ENCODE measurements at regions of chr5 and their contacts with region 1.

Region 1: DNA sequence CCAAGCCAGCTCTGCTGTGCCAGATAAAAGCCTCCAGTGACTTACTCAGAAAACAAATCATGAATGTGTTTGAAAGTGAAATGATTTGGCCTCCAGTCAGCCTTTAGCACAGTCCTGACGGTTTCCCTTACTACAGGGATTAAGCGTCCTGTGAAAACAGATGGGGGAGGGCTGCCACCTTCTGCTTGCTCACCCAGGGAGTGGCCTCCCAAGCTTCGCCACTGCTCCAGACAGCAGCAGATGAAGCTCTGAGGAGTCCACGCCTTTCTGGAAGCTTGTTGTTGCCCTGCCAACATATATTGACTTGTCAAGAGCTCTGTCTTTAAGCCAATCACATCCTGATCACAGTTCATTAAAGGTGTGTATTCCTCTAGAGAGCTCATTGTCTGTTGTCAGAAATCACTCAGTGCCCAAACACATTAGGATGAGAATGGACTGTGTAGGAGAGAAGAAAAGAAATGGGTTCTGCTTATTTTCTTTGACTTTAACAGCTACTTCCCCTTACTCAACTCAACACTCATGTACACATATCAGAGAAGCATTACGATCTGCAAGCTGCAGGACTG is 4.9 kb upstream of the FYB1 start:
- DNase-seq: peak; percentile 63 to 79
- H3K4me3 ChIP-seq: no peak overlapping the region
- H3K27ac ChIP-seq: peak overlapping the region in 3 of 5 donors; percentile 7 to 33 (median 28)
- H3K4me1 ChIP-seq: peaks cover 0 to 27% (median 7%) of the 10 kb centered on the region in 4 donors
- H3K27me3 ChIP-seq: no peaks in the 10 kb centered on the region
- CTCF ChIP-seq: no peak
- EP300 ChIP-seq: no peak
- POLR2A ChIP-seq: no peak

Region 2: DNA sequence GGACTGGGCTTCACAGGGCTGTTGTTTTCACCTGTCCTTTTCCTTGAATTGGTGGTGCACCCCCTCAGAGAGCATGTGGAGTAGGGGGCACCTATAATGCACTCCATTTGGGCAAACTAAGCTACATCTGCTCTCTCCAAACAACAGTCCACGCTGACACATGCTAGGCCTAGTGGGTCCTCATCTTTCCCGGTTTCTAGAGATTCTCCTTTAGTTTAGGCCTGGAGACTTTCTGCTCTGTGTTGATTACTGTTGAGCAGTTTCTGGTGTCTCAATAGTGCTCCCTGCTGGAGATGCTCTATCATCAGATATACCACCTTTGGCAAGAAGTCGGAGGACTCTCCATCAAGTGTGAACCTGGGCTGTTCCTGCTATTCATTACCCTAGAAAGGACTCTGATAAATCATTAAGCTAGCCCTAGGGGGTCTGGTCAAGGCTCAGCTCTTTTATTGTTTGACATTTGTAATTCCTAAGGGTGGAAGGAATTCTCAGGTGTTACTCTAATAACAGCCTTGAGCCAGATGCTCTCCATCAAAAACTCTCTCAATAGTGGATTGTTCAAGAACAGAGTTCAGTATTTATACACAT is 59.0 kb after region 1 on chr5:
- intact Hi-C with region 1: loop called (anchors 10 kb)
- DNase-seq: peak in 1 of 2 donors; percentile 86
- H3K4me3 ChIP-seq: no peak overlapping the region
- H3K27ac ChIP-seq: no peak overlapping the region
- H3K4me1 ChIP-seq: peaks cover 0 to 16% (median 4%) of the 10 kb centered on the region in 4 donors
- H3K27me3 ChIP-seq: no peaks in the 10 kb centered on the region
- CTCF ChIP-seq: peak in 4 of 7 experiments; percentile 34 to 47 (median 38)
- EP300 ChIP-seq: no peak
- POLR2A ChIP-seq: no peak

Region 3: DNA sequence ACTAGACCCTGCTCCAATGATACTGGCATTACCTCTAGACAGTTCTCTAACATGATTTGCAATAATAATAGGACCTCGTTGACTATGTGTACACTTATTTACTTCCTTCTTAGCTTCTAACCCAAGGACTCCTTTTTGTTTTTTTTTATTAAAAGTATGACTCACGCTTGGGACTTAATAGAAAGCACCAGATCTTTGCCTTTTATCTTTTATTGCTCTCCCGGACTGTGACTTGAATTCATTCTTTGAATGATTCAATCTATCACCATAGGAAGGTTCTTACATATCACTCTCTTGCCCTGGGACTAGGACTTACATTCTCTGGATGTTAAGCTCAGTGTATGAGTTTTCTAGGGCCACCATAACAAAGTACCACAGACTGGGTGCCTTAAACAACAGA is 131.0 kb after region 1 on chr5:
- intact Hi-C with region 1: no loop called
- DNase-seq: no peak
- H3K4me3 ChIP-seq: no peak overlapping the region
- H3K27ac ChIP-seq: no peak overlapping the region
- H3K4me1 ChIP-seq: no peaks in the 10 kb centered on the region
- H3K27me3 ChIP-seq: no peaks in the 10 kb centered on the region
- CTCF ChIP-seq: no peak
- EP300 ChIP-seq: no peak
- POLR2A ChIP-seq: no peak

Region 4: DNA sequence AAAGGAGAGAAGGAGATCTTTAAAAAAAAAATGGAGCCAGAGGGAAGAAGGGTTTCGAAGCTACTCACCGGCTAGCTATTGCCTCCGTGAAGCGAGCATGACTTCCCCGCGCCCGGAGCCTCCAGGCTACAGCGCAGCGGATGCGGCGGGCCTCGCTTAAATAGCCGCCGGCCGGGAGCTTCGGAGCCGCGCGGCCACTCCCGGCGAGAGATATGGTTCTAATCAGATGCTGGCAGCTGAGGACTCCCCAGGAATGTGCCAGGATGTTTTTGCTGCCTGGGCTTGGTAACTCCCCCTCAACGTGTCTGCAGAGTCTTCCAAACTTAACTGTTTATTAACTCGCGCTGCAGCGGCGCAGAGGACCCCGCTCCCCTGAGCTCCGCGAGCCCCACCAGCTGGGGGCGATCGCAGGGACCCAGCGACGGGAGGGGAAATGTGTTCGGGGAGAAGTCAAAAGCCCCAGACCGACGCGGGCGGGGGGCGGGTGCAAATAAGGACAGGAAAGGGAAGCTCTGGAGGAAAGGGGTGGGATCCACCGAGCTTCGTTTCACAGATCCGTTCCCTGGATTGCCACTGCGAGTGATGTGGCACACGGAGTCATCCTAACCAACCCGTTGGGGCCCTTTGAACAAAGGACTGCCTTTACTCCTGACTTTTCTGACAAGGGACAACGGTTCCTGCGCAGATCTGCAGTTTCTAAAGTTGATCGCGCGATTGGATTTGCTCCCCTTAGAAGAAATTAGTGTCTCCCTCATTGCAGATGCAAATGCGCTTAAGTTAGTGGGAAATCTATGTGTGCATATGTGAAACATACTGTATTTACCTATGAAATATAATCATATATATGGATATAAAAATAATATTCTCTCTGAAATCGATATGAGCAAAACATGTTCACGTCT is 200.7 kb after region 1 on chr5 and contains the start of gene DAB2:
- intact Hi-C with region 1: no loop called
- DNase-seq: peak; percentile 73 to 91
- H3K4me3 ChIP-seq: peak within 1 kb of the TSS; percentile 56 to 63 (median 61)
- H3K27ac ChIP-seq: peak within 1 kb of the TSS; percentile 48 to 88 (median 84)
- H3K4me1 ChIP-seq: peaks cover 5 to 57% (median 32%) of the 10 kb centered on the region in 4 donors
- H3K27me3 ChIP-seq: peaks cover 0 to 7% (median 0%) of the 10 kb centered on the region in 3 donors
- CTCF ChIP-seq: peak in 2 of 7 experiments; percentile 19 to 22
- EP300 ChIP-seq: no peak
- POLR2A ChIP-seq: peak in 1 of 4 donors; percentile 15
- total RNA-seq, gene DAB2: 4.9 to 74.4 (median 43.0) TPM

Region 5: DNA sequence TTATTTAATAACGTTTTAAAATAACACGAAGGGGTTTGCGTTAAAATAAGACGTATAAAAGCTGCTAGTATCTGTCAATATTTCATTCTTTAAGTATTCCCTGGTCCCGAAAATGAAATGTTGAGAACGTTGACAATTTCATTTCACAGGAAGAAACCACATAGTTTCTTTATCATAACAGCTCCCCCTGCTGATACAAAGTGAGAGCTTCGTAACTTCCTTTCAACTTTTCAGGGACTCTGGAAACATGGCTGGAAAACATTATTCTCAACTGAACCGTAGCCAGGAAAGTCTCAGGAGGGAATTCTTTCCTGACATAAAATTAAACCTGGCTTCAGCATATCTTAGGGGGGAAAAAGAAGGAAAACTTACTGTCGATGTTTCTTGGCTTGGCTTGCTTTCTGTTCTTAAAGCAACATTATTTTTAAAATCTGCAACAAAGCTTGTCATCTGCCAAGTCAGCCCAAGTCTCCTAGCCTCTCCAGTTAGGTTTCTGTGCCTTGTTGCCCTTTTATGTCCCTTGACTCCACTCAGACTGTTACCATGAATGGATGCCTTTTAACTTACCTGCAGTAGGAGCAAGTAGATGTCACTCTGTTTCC is 323.4 kb after region 1 on chr5:
- intact Hi-C with region 1: loop called (anchors 10 kb)
- DNase-seq: peak in 1 of 2 donors; percentile 90
- H3K4me3 ChIP-seq: peak overlapping the region in 1 of 4 donors; percentile 3
- H3K27ac ChIP-seq: no peak overlapping the region
- H3K4me1 ChIP-seq: peaks cover 0 to 13% (median 5%) of the 10 kb centered on the region in 4 donors
- H3K27me3 ChIP-seq: no peaks in the 10 kb centered on the region
- CTCF ChIP-seq: peak in 5 of 7 experiments; percentile 39 to 67 (median 59)
- EP300 ChIP-seq: no peak
- POLR2A ChIP-seq: no peak